ENCODE measurements at regions of chr15 and their contacts with region 1.

Region 1: GRCh38 chr15:60326824-60327654 is 70.7 kb downstream of the ANXA2 start:
- DNase-seq: peak; percentile 48
- H3K4me3 ChIP-seq: no peak overlapping the region
- H3K27ac ChIP-seq: no peak overlapping the region
- H3K4me1 ChIP-seq: peaks cover 3% of the 10 kb centered on the region
- H3K27me3 ChIP-seq: no peaks in the 10 kb centered on the region
- CTCF ChIP-seq: peak; percentile 82 to 91

Region 2: DNA sequence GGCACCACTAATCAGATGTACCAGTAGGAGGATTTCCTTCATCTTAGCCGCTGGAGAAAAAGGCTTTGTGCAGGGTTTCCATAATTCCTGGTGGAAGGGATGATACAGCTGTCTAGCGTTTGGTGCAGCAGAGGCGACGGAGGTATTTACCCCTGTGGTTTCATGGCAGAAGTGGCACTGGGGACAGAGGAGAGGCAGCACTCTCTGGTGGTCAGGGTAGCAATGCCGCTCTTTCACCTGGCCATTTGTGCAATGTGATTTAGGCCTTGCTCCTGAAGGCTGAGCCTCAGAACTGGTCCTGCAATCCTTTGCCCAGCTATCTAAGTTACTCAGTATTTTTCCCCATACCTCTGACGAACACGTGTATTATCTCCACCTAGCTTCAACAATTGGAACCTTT is 590.9 kb before region 1 on chr15:
- CTCF ChIA-PET with region 1: no interaction called
- dilution Hi-C with region 1: loop called (anchors 5 kb)
- in situ Hi-C with region 1: loop called in 1 of 2 experiments (anchors 25 kb)
- intact Hi-C with region 1: no loop called
- DNase-seq: no peak
- H3K4me3 ChIP-seq: no peak overlapping the region
- H3K27ac ChIP-seq: no peak overlapping the region
- H3K4me1 ChIP-seq: no peaks in the 10 kb centered on the region
- H3K27me3 ChIP-seq: peaks cover 3% of the 10 kb centered on the region
- CTCF ChIP-seq: no peak

Region 3: GRCh38 chr15:59997070-59997701 is 329.9 kb before region 1 on chr15:
- CTCF ChIA-PET with region 1: no interaction called
- dilution Hi-C with region 1: no loop called
- in situ Hi-C with region 1: no loop called
- intact Hi-C with region 1: loop called (anchors 1 kb)
- DNase-seq: peak; percentile 38
- H3K4me3 ChIP-seq: no peak overlapping the region
- H3K27ac ChIP-seq: no peak overlapping the region
- H3K4me1 ChIP-seq: peaks cover 8% of the 10 kb centered on the region
- H3K27me3 ChIP-seq: peaks cover 91% of the 10 kb centered on the region
- CTCF ChIP-seq: peak in 1 of 2 donors; percentile 32

Region 4: GRCh38 chr15:60179786-60180391 is 147.2 kb before region 1 on chr15:
- CTCF ChIA-PET with region 1: interaction called, 3 read pairs
- dilution Hi-C with region 1: no loop called
- in situ Hi-C with region 1: no loop called
- intact Hi-C with region 1: loop called (anchors 2 kb)
- DNase-seq: peak; percentile 32
- H3K4me3 ChIP-seq: no peak overlapping the region
- H3K27ac ChIP-seq: no peak overlapping the region
- H3K4me1 ChIP-seq: peaks cover 6% of the 10 kb centered on the region
- H3K27me3 ChIP-seq: no peaks in the 10 kb centered on the region
- CTCF ChIP-seq: peak; percentile 90 to 98

Region 5: GRCh38 chr15:60390871-60391501 is 63.9 kb after region 1 on chr15:
- CTCF ChIA-PET with region 1: no interaction called
- dilution Hi-C with region 1: no loop called
- in situ Hi-C with region 1: no loop called
- intact Hi-C with region 1: loop called (anchors 2 kb)
- DNase-seq: peak; percentile 92
- H3K4me3 ChIP-seq: peak overlapping the region in 2 of 3 experiments; percentile 12 to 34
- H3K27ac ChIP-seq: peak overlapping the region; percentile 97
- H3K4me1 ChIP-seq: peaks cover 67% of the 10 kb centered on the region
- H3K27me3 ChIP-seq: no peaks in the 10 kb centered on the region
- CTCF ChIP-seq: no peak

Region 6: DNA sequence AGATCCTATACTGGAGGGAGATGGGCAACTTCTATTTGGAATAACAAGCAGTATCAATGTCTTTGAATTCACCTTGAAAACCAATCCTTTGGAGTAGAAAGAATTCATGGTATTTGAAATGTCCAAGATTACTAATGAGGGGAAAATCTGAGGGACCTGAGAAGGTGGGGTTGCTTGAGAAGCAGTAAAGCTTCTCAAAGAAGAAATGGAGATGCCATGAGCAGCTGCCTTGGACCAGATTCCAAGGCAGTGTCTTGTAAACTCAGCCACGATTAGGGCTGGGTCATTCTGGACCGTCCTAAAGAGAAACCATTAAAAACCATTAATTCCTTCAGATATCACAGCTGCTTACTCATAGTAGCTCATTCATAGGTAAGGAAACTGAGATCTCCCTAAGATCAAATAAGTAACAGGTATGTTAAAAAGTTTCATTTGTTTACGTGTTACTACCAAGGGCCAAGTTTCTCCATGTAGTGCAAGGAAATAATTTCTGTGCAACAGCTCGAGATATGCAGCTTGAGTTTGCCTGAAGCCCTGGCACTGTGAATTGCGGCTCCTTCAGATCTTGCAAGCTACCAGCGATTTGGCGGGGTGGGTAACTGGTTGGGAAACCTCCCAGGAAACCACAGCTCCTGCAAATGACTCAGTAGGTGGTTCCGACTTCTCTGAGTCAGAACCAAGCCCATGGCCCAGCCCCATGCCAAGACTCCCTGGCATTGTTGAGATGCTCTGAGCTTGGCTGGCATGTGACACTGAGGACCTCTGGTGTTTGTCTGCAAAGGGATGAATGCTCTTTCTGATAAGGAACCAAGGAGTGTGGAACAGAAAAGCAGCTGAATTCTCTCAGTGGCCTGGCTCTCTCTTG is 605.2 kb after region 1 on chr15:
- CTCF ChIA-PET with region 1: no interaction called
- dilution Hi-C with region 1: no loop called
- in situ Hi-C with region 1: no loop called
- intact Hi-C with region 1: loop called (anchors 5 kb)
- DNase-seq: peak; percentile 93
- H3K4me3 ChIP-seq: peak overlapping the region in 1 of 3 experiments; percentile 23
- H3K27ac ChIP-seq: no peak overlapping the region
- H3K4me1 ChIP-seq: peaks cover 26% of the 10 kb centered on the region
- H3K27me3 ChIP-seq: peaks cover 3% of the 10 kb centered on the region
- CTCF ChIP-seq: peak; percentile 68 to 79

Measured in mammary epithelial cell (primary cell).